PC-9 (cell line): ENCODE measurements at regions of chr2 and their contacts with region 1.

Region 1: GRCh38 chr2:157996799-157997198 is 104.9 kb upstream of the UPP2 start:
- DNase-seq: no peak
- H3K4me3 ChIP-seq: no peak overlapping the region
- H3K27ac ChIP-seq: no peak overlapping the region
- H3K4me1 ChIP-seq: no peaks in the 10 kb centered on the region
- H3K27me3 ChIP-seq: no peaks in the 10 kb centered on the region
- CTCF ChIP-seq: no peak

Region 2: DNA sequence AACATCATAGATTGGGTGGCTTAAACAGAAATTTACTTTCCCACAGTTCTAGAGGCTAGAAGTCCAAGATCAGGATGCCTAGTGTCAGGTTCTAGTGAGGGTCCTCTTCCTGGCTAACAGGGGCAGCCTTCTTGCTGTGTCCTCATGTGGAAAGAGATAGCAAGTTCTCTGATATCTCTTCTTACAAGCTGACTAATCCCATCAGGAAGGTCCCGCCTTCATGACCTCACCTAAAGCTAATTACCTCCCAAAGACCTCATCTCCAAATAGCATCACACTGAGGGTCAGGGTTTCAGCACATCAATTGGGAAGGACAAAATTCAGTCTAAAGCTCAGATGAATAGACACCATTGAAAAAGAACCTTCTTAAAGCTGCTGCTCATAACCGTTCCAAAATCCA is 143.6 kb before region 1 on chr2:
- CTCF ChIA-PET with region 1: no interaction called
- POLR2A ChIA-PET with region 1: no interaction called
- intact Hi-C with region 1: no loop called
- DNase-seq: no peak
- H3K4me3 ChIP-seq: no peak overlapping the region
- H3K27ac ChIP-seq: no peak overlapping the region
- H3K4me1 ChIP-seq: 0 out of 2 replicates have a peak, but pooled peaks cover 4% of the 10 kb centered on the region
- H3K27me3 ChIP-seq: no peaks in the 10 kb centered on the region
- CTCF ChIP-seq: no peak

Region 3: GRCh38 chr2:157922336-157922735 is 74.5 kb before region 1 on chr2:
- CTCF ChIA-PET with region 1: no interaction called
- POLR2A ChIA-PET with region 1: no interaction called
- intact Hi-C with region 1: loop called (anchors 2 kb)
- DNase-seq: no peak
- H3K4me3 ChIP-seq: no peak overlapping the region
- H3K27ac ChIP-seq: no peak overlapping the region
- H3K4me1 ChIP-seq: no peaks in the 10 kb centered on the region
- H3K27me3 ChIP-seq: no peaks in the 10 kb centered on the region
- CTCF ChIP-seq: no peak

Region 4: DNA sequence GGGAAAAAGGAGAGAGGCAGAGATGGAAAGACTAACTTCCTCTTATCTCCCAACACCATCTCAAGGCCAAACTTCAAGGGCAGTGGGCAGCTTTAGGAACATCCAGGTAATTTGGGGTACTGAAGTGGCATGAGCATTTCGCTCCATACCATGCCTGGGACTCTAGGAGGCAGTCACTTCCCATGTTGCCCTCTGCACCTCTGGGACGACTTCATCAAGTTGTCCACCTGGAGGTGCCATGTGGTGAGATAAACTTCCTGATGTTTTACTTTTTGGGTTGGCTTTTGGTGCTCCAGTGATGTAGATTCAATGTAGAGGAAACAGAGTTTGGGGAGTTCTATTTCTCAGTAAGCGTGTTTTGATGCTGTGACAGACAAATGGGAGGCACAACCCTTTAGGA is 48.6 kb after region 1 on chr2:
- CTCF ChIA-PET with region 1: no interaction called
- POLR2A ChIA-PET with region 1: no interaction called
- intact Hi-C with region 1: no loop called
- DNase-seq: no peak
- H3K4me3 ChIP-seq: no peak overlapping the region
- H3K27ac ChIP-seq: no peak overlapping the region
- H3K4me1 ChIP-seq: no peaks in the 10 kb centered on the region
- H3K27me3 ChIP-seq: no peaks in the 10 kb centered on the region
- CTCF ChIP-seq: no peak

Region 5: DNA sequence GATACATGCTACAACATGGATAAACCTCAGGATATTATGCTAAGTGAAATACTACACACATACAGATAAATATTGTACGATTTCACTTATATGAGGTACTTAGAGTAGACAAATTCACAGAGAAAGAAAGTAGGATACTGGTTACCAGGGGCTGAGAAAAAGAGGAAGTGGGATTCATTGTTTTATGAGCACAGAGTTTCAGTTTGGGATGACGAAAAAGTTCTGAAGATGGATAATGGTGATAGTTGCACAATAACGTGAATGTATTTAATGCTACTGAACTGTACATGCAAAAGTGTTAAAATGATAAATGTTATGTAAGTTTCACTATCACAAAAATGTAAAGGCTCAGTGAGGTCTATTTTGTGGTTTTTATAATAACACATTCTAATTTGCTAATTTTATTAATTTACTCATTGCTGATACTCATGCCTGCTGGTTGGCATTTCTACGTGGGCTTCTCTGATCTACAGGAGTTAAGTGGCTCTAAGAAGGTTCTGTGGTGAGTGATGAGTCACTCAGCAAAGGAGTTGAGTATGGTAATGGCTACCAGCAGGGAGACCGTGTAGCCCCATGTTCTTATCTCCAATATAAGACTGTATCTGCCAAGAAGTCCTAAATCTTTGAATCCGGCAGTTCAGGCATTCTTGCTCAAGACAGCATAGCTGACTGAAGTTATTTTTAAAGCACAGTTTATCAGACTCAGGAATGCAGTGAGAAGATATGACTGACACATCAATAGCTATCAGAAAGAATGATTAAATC is 146.0 kb after region 1 on chr2:
- CTCF ChIA-PET with region 1: no interaction called
- POLR2A ChIA-PET with region 1: no interaction called
- intact Hi-C with region 1: no loop called
- DNase-seq: no peak
- H3K4me3 ChIP-seq: no peak overlapping the region
- H3K27ac ChIP-seq: no peak overlapping the region
- H3K4me1 ChIP-seq: no peaks in the 10 kb centered on the region
- H3K27me3 ChIP-seq: no peaks in the 10 kb centered on the region
- CTCF ChIP-seq: no peak